Aorta (tissue), 5 donors: ENCODE measurements at regions of chr1 and their contacts with region 1.

Region 1: GRCh38 chr1:30085811-30086770 is 637.3 kb downstream of the MATN1 start:
- DNase-seq: peak; percentile 82 to 92
- ATAC-seq: peak; percentile 80
- H3K4me3 ChIP-seq: peak overlapping the region in 1 of 2 donors; percentile 22
- H3K27ac ChIP-seq: peak overlapping the region in 1 of 2 donors; percentile 95
- H3K4me1 ChIP-seq: peaks cover 0 to 6% of the 10 kb centered on the region in 2 donors
- H3K27me3 ChIP-seq: no peaks in the 10 kb centered on the region

Region 2: GRCh38 chr1:29708901-29709710 is 377.0 kb before region 1 on chr1:
- intact Hi-C with region 1: loop called (anchors 1 to 2 kb)
- DNase-seq: no peak
- ATAC-seq: peak; percentile 37
- H3K4me3 ChIP-seq: no peak overlapping the region
- H3K27ac ChIP-seq: peak overlapping the region; percentile 71 to 95
- H3K4me1 ChIP-seq: no peaks in the 10 kb centered on the region
- H3K27me3 ChIP-seq: no peaks in the 10 kb centered on the region

Region 3: DNA sequence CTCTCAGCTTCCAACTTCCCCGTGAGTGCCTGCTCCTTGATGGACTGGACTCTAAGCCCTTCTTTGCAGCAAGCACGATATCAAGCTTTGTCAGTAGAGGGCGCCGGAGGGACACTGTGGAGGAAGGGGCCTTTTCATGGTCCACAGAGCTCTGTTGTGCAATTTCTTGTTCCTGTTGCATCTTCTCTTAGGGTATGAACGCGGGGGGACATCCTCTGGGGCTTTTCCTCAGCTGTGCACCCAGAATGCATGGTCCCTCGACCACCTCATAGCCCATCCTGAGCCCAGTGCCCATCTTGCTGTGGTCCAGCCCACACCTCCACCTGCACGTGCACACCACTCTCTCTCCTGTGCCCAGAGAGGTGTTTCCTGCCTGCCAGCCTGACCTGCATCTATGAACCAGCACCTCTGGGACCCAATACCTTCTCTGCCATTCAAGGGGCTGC is 293.0 kb before region 1 on chr1:
- intact Hi-C with region 1: loop called (anchors 2 to 5 kb)
- DNase-seq: peak; percentile 90 to 91
- ATAC-seq: peak; percentile 60
- H3K4me3 ChIP-seq: no peak overlapping the region
- H3K27ac ChIP-seq: no peak overlapping the region
- H3K4me1 ChIP-seq: no peaks in the 10 kb centered on the region
- H3K27me3 ChIP-seq: no peaks in the 10 kb centered on the region

Region 4: GRCh38 chr1:29912425-29912824 is 173.7 kb before region 1 on chr1:
- intact Hi-C with region 1: loop called in 1 of 2 experiments (anchors 5 kb)
- DNase-seq: no peak
- ATAC-seq: no peak
- H3K4me3 ChIP-seq: no peak overlapping the region
- H3K27ac ChIP-seq: no peak overlapping the region
- H3K4me1 ChIP-seq: no peaks in the 10 kb centered on the region
- H3K27me3 ChIP-seq: no peaks in the 10 kb centered on the region

Region 5: DNA sequence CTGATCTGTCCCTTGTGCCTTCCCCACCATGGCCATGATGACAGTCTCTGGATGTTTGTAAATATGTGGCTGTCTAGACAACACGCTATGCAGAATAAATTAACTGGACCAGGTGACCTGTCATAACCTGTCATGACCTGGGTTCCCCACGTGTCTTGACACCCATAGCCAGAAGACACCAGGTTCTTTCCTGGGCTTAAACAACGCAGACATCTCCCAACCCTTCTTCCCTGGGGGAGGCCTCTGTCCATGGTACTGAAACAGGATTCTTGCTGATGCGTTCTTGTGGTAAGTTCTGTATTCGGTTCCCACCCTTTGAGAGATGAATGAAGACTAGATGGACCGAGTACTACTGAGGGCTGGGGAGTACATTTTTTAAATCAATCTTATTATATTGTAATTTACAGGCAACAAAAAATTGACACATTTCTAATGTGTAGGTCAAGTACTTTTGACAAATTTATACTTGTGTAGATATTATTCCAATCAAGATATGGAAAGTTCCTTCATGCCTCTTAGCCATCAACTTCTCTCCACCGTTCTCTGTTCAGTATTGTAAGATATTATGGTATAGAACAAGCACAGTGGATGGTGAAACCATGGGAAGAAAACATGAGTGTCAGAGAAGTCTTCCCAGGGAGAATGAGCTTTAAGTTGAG is 110.9 kb before region 1 on chr1:
- intact Hi-C with region 1: no loop called
- DNase-seq: no peak
- ATAC-seq: no peak
- H3K4me3 ChIP-seq: no peak overlapping the region
- H3K27ac ChIP-seq: no peak overlapping the region
- H3K4me1 ChIP-seq: no peaks in the 10 kb centered on the region
- H3K27me3 ChIP-seq: no peaks in the 10 kb centered on the region

Region 6: GRCh38 chr1:30043731-30044408 is 42.2 kb before region 1 on chr1:
- intact Hi-C with region 1: no loop called
- DNase-seq: no peak
- ATAC-seq: no peak
- H3K4me3 ChIP-seq: no peak overlapping the region
- H3K27ac ChIP-seq: no peak overlapping the region
- H3K4me1 ChIP-seq: no peaks in the 10 kb centered on the region
- H3K27me3 ChIP-seq: no peaks in the 10 kb centered on the region

Region 7: DNA sequence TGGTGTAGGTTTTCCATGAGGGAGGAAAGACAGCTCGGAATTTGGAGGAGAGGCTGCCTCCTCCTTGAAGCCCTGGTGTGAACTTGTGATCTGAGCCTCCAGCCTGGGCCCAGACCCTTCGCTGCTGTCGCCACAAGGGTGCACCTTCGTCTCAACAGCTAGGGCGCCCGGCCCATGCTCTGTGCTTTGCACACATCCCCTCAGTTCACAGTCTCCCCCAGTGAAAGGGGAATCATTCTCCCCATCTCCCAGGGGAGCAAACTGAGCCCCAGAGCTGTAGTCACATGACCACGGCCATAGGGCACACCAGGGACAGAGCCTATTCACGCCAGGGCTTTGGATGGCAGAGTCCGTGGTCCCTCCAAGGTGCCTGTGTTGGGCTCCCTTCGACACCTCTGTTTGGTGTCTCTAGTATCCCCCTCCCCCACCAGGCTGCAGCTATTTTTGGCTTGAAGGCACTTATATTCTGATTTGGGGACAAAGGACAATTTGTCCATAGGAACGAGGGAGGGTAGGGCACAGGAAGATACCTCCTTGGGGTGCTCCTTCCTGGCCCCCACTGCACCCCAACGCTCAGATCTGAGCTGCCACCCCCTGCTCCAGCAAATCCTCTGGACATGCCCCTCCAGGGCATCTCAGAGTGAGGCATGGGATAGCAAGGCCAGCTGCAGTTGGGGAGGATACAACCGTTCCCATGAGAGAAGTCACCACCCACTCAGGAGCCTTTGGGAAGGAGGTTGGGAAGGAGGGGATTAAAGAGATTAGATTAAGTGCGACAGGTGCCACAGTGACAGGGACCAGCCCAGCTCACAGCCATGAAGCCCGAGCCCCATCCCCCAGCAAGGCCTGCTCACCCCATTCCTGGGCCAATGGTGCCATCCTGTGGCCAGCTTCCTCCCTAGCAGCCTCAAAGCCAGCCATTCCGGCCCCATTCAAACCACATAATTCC is 621.6 kb after region 1 on chr1:
- intact Hi-C with region 1: loop called in 1 of 2 experiments (anchors 5 kb)
- DNase-seq: peak; percentile 76 to 90
- ATAC-seq: peak; percentile 79
- H3K4me3 ChIP-seq: no peak overlapping the region
- H3K27ac ChIP-seq: no peak overlapping the region
- H3K4me1 ChIP-seq: no peaks in the 10 kb centered on the region
- H3K27me3 ChIP-seq: no peaks in the 10 kb centered on the region